ENCODE measurements at regions of chr20 and their contacts with region 1.

Region 1: DNA sequence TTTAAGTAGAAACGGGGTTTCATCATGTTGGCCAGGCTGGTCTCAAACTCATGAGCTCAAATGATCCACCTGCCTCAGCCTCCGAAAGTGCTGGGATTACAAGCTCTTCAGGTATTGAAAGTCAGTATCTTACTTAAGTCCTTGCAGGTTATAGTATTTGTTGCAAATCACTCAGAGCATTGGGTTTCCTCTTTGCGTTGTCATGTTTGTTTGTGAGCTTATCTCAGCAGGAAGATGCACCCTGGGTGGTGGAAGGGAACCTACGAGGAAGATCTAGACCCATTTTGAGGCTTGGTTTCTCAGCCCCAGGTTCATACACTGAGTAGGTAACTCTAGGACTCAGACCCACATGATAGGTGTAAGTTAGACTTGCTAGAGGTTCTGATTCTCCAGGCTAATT is 18.6 kb downstream of the MYH7B start:
- DNase-seq: no peak
- H3K4me3 Mint-ChIP-seq: no peak overlapping the region
- H3K27ac Mint-ChIP-seq: no peak overlapping the region
- H3K4me1 Mint-ChIP-seq: no peaks in the 10 kb centered on the region
- H3K27me3 Mint-ChIP-seq: peaks cover 59% of the 10 kb centered on the region
- CTCF ChIP-seq: no peak

Region 2: GRCh38 chr20:33026779-33027759 is 1947.2 kb before region 1 on chr20:
- CTCF ChIA-PET with region 1: interaction called, 10 read pairs
- intact Hi-C with region 1: no loop called
- DNase-seq: no peak
- H3K4me3 Mint-ChIP-seq: no peak overlapping the region
- H3K27ac Mint-ChIP-seq: no peak overlapping the region
- H3K4me1 Mint-ChIP-seq: no peaks in the 10 kb centered on the region
- H3K27me3 Mint-ChIP-seq: no peaks in the 10 kb centered on the region
- CTCF ChIP-seq: no peak

Region 3: DNA sequence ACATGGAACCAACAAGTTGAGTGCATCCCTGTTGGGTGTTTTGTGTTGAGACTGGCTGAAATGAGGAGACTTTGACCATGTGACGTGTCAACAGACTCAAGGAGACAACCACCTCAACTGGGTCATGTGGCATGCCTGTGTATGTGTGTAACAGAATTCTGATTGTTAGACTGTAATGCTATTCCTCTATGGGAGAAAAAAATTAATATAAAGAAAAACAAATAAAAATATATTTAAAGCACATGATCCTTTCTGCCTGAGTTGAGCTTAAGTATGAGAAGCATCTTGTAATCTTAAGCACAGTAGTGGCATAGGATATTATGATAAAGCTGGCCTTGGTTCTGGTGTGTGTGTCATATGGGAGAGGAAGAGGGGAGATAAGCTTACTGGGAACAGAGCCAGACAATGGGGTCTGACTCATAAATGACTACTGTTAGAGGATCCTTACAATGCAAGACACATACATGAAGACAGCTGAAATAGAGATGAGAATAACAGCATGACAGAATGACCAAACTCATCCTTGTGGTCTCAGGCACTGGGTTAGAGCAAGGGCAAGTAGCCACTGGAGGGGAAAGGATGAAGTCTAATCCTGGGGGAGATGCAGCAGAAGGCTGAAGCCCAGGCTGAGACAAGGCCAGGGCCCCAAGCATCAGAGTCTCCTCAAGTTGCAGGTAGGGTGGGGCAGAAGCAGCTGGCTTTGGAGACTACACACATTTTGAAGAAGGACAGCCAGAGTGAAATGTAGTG is 260.9 kb before region 1 on chr20:
- CTCF ChIA-PET with region 1: no interaction called
- intact Hi-C with region 1: no loop called
- DNase-seq: peak; percentile 65
- H3K4me3 Mint-ChIP-seq: no peak overlapping the region
- H3K27ac Mint-ChIP-seq: peak overlapping the region; percentile 18
- H3K4me1 Mint-ChIP-seq: peaks cover 33% of the 10 kb centered on the region
- H3K27me3 Mint-ChIP-seq: peaks cover 17% of the 10 kb centered on the region
- CTCF ChIP-seq: no peak

Region 4: DNA sequence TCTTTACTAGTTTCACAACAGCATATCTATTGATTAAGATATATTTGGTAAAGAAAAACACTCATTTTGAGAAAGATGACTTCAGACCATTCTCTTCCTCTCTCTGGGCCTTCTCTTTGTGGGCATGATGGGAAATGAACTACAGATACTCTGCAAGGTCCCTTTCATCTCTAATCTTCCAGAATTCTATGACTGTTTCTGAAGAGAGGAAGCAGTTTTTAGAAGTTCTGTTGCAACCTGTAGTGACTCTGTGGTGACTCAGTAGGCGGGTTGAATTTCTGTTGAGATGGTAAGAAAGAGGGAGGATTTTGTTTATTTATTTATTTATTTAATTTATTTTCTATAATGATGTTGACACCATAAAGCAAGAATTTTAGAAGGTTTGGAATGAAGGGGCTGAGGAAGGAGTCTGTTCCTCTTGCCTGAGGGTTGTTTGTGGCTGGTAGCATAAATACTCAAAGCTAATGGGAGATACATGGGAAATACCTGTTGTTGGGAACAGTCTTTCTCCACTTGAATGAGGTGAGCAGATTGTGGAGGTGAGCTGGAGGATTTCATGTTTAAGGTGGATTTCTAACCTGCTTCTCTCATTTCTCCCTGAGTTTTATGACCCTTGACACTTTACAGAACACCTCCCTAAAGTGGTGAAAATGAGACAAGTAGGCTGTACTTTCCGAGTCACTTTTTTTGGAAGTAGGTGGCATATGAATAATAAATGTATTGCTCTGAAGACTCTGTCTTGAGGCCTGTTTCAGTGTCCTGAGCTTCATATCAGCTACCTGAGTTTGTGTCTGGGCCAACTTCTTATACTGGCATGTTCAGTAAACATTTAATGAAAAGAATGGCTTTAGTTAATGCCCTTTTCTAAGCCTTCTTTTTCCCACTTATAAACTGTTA is 82.8 kb before region 1 on chr20:
- CTCF ChIA-PET with region 1: no interaction called
- intact Hi-C with region 1: no loop called
- DNase-seq: no peak
- H3K4me3 Mint-ChIP-seq: no peak overlapping the region
- H3K27ac Mint-ChIP-seq: no peak overlapping the region
- H3K4me1 Mint-ChIP-seq: peaks cover 15% of the 10 kb centered on the region
- H3K27me3 Mint-ChIP-seq: no peaks in the 10 kb centered on the region
- CTCF ChIP-seq: no peak

Measured in Calu3 (cell line).